ENCODE measurements at regions of chr6 and their contacts with region 1.

Region 1: GRCh38 chr6:145734486-145735355 is 599 bp downstream of the EPM2A start:
- DNase-seq: peak; percentile 94
- H3K4me3 ChIP-seq: peak overlapping the region; percentile 58 to 81 (median 63)
- H3K27ac ChIP-seq: peak overlapping the region; percentile 95 to 99 (median 98)
- H3K4me1 ChIP-seq: peaks cover 0 to 49% (median 32%) of the 10 kb centered on the region in 4 donors
- H3K27me3 ChIP-seq: no peaks in the 10 kb centered on the region
- CTCF ChIP-seq: no peak
- EP300 ChIP-seq: no peak
- POLR2A ChIP-seq: peak; percentile 24 to 45

Region 2: DNA sequence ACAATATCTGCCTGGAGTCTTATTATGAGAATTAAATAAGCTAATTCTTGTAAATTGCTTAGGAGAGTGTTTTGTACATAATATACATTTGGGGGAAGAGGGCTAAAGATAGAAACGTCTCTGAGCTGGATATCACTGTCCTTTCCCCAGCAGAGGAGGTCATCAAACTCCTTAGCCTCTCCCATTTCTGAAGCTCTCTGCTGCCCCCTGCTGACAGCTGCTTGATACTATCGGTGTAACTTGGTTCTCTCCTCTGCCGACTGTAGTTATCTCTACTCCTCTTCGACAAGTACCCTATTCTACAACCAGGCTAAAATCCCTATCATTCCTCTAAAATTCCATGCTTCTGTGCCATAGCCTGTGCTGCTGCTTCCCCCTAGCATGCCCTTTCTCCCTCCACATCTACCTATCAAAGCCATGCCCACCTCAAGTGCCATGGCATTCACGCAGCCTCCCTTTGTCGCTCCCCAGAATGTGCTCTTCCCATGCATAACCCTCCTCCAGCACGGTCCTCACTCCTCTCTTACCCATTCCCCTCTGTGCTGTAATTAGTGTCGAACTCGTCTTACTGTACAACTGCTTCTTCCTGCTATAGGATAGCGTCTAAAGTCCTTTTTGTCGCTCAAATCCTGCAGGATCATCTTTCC is 100.6 kb before region 1 on chr6:
- intact Hi-C with region 1: no loop called
- DNase-seq: peak; percentile 85
- H3K4me3 ChIP-seq: no peak overlapping the region
- H3K27ac ChIP-seq: no peak overlapping the region
- H3K4me1 ChIP-seq: no peaks in the 10 kb centered on the region
- H3K27me3 ChIP-seq: no peaks in the 10 kb centered on the region
- CTCF ChIP-seq: peak; percentile 25 to 76 (median 64)
- EP300 ChIP-seq: no peak
- POLR2A ChIP-seq: no peak

Region 3: DNA sequence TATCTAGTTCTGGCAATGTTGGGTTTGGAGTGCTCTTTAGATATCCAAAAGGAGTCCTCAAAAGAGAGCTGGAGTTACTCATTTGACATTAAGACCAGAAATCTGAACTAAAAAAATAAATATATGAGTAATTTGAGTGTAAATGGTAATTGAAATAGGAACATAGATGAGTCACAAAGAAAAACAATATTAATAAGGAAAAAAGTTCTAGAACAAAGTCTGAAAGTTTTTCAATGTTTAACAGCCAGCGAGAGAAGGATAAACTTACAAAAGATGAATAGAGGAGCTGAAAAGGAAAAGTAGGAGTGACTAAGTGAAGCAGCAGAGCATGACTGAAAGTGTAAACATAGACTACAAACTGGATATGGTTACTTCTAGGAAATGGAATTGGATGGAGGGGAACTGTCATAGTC is 46.2 kb before region 1 on chr6:
- intact Hi-C with region 1: no loop called
- DNase-seq: no peak
- H3K4me3 ChIP-seq: no peak overlapping the region
- H3K27ac ChIP-seq: no peak overlapping the region
- H3K4me1 ChIP-seq: peaks cover 0 to 6% (median 4%) of the 10 kb centered on the region in 4 donors
- H3K27me3 ChIP-seq: no peaks in the 10 kb centered on the region
- CTCF ChIP-seq: no peak
- EP300 ChIP-seq: no peak
- POLR2A ChIP-seq: no peak

Region 4: GRCh38 chr6:145802141-145802540 is 67.4 kb after region 1 on chr6:
- intact Hi-C with region 1: loop called (anchors 2 kb)
- DNase-seq: no peak
- H3K4me3 ChIP-seq: no peak overlapping the region
- H3K27ac ChIP-seq: peak overlapping the region in 2 of 4 donors; percentile 10 to 52
- H3K4me1 ChIP-seq: peaks cover 0 to 89% (median 23%) of the 10 kb centered on the region in 4 donors
- H3K27me3 ChIP-seq: no peaks in the 10 kb centered on the region
- CTCF ChIP-seq: no peak
- EP300 ChIP-seq: no peak
- POLR2A ChIP-seq: no peak

Region 5: GRCh38 chr6:145814501-145815308 is 80.0 kb after region 1 on chr6 and contains the start of gene FBXO30:
- intact Hi-C with region 1: loop called (anchors 1 kb)
- DNase-seq: peak; percentile 91
- H3K4me3 ChIP-seq: peak within 1 kb of the TSS; percentile 47 to 91 (median 76)
- H3K27ac ChIP-seq: peak within 1 kb of the TSS; percentile 89 to 98 (median 96)
- H3K4me1 ChIP-seq: peaks cover 0 to 49% (median 39%) of the 10 kb centered on the region in 4 donors
- H3K27me3 ChIP-seq: no peaks in the 10 kb centered on the region
- CTCF ChIP-seq: peak; percentile 25 to 56 (median 40)
- EP300 ChIP-seq: no peak
- POLR2A ChIP-seq: peak; percentile 76 to 78
- total RNA-seq, gene FBXO30: 37.9 to 53.9 (median 43.9) TPM

Region 6: GRCh38 chr6:145887969-145888368 is 153.2 kb after region 1 on chr6:
- intact Hi-C with region 1: loop called (anchors 2 kb)
- DNase-seq: peak; percentile 63
- H3K4me3 ChIP-seq: no peak overlapping the region
- H3K27ac ChIP-seq: peak overlapping the region; percentile 47 to 70 (median 66)
- H3K4me1 ChIP-seq: peaks cover 0 to 55% (median 28%) of the 10 kb centered on the region in 4 donors
- H3K27me3 ChIP-seq: no peaks in the 10 kb centered on the region
- CTCF ChIP-seq: peak; percentile 44 to 64 (median 58)
- EP300 ChIP-seq: no peak
- POLR2A ChIP-seq: no peak

Region 7: DNA sequence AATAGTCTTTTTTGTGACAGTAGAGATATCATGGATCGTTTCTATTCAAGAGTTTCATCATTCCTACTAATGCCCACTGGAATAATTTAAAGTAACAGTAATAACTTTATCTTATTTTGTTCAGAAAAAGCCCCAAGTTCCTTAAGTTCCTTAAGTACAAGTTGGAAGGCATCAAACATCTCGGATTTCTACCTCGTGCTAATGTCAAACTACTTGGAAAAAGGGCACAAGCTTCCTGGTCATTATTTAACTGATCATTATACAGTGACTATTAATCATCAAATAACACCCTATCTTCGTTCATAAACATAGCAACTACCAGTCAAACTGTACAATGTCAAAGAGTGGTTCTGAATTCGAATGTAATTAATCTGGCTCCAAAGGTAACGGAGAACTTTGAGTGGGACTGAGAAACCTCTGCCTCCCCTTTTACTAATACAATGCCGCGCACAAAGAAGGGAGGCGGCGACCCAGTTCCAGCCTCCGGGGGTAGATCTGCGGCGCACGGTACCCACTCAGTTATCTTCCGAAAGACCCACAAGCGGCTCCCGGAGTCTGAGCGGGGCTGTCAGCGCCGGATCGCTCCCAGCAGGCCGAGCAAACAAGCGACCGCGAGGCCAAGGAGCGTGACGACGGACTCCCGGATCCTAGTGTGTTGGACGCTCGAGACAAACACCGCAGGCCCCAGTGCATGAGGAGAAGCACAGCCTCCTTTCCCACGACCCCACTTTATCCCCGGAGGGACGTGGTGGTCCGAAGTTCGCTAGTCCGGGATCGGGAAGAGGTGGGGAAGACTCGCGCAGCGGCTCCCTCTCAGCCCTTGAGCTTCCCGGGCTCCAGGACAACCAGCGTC is 228.7 kb after region 1 on chr6:
- intact Hi-C with region 1: loop called (anchors 2 kb)
- DNase-seq: peak; percentile 76
- H3K4me3 ChIP-seq: peak overlapping the region; percentile 66 to 81 (median 74)
- H3K27ac ChIP-seq: peak overlapping the region; percentile 85 to 92 (median 88)
- H3K4me1 ChIP-seq: peaks cover 0 to 40% (median 34%) of the 10 kb centered on the region in 4 donors
- H3K27me3 ChIP-seq: no peaks in the 10 kb centered on the region
- CTCF ChIP-seq: no peak
- EP300 ChIP-seq: no peak
- POLR2A ChIP-seq: no peak

Region 8: DNA sequence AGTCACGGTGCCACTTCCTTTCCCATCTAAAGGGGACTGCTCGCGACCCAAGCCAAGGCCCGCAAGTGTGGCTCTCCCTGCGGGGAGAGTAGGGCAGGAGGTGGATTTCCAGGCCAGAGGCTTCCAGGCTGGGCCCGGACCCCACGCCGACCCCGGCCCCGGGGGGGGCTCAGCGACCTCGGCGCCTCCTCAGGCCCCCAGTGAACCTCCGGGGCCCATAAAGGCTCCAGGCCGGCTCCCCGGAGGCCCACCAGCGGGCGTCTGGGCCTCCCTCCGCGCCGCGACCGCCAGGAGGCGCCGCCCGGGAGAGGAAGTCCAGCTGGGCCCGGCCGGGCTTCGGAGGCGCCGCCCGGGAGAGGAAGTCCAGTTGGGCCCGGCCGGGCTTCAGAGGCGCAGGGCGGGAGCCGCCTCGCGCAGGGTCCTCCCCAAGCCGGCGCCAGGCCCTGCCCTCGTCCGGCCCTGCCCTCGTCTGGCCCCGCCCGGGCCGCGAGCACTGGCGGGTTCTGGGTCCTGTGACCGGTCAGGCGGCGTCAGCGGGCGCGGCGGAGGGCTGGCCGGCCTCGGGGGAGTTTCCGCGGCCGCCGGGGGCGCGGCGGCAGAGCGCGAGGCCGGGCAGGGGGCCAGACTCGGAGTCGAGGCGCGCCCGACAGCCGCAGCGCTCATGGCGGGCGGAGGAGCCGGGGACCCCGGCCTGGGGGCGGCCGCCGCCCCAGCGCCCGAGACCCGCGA is 808.7 kb after region 1 on chr6 and contains the start of gene RAB32:
- intact Hi-C with region 1: loop called (anchors 5 kb)
- DNase-seq: peak; percentile 96
- H3K4me3 ChIP-seq: peak within 1 kb of the TSS; percentile 81 to 92 (median 82)
- H3K27ac ChIP-seq: peak within 1 kb of the TSS; percentile 98 to 100 (median 99)
- H3K4me1 ChIP-seq: peaks cover 0 to 36% (median 27%) of the 10 kb centered on the region in 4 donors
- H3K27me3 ChIP-seq: no peaks in the 10 kb centered on the region
- CTCF ChIP-seq: peak; percentile 10 to 82 (median 34)
- EP300 ChIP-seq: no peak
- POLR2A ChIP-seq: no peak
- total RNA-seq, gene RAB32: 32.1 to 35.3 (median 33.3) TPM

Region 9: DNA sequence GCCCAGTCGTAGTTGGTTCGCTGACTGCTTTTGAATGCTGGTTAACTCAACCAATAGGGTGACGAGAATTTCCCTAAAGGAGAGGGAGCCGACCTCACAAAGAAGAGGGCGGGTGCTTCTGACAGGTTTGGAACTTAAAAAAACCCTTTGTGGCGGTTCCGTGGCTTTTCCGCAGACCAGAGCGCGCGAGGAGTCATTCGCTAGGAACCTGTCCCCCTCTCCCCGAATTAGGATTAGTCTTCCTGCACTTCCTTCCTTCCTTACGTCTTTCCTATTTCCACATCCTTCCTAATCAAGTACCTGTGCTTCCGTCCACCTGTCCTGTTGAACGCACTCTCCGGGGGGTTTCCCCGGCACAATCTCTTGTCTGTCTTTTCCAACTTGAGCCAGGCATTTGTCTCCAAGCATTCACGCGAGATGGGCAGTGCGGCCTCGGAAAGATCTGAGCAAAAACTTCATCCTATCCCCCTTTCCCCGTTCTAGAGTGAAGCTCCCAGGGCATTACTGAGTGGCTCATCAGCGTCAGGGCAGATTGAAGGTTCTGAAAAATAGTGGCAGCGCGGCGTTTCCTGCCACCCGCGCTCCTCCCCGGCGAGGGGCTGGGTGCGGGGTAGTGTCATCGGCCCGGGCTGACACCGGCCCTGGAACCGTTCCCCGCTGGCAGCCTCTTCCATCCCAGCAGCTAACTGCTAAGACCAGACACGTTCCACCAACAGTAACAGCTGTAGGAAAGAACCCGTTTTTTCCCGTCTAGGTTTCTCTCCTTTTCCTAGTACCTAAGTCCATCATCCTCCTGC is 1468.0 kb after region 1 on chr6:
- intact Hi-C with region 1: loop called (anchors 10 kb)
- DNase-seq: peak; percentile 94
- H3K4me3 ChIP-seq: peak overlapping the region; percentile 54 to 91 (median 86)
- H3K27ac ChIP-seq: peak overlapping the region; percentile 93 to 98 (median 96)
- H3K4me1 ChIP-seq: peaks cover 0 to 26% (median 13%) of the 10 kb centered on the region in 4 donors
- H3K27me3 ChIP-seq: no peaks in the 10 kb centered on the region
- CTCF ChIP-seq: no peak
- EP300 ChIP-seq: no peak
- POLR2A ChIP-seq: peak; percentile 54 to 81